Endothelial cell of umbilical vein (primary cell): ENCODE measurements at regions of chr2 and their contacts with region 1.

Region 1: DNA sequence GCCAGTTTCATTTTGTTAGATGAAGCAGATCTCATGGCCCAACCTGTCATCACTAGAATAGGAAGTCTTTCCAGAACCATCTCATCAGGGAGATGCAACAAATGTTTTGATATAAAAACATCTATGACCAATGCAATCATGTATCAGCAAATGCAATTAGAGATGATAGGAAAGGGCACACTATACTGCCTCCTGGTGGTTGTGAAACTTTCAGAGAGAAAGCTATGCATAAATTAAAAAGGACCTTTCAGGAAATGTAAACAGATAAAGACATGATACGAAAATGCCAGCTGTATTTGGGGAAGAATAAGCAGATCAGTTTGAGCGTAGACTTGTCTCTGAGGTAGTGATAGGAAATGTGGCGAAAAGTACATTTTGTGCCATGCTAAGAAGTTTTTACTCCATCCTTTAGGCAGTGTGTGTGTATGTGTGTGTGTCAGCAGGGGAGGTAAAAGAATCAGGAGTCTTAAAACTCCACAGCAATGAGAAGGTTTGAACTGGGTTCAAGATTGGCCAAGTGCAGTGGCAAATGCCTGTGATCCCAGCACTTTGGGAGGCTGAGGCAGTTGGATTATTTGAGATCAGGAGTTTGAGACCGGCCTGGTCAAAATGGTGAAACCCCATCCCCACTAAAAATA is 479.3 kb downstream of the CPS1 start:
- DNase-seq: peak; percentile 53
- H3K4me3 ChIP-seq: no peak overlapping the region
- H3K27ac ChIP-seq: no peak overlapping the region
- H3K4me1 ChIP-seq: no peaks in the 10 kb centered on the region
- H3K27me3 ChIP-seq: no peaks in the 10 kb centered on the region
- CTCF ChIP-seq: peak; percentile 43 to 56
- POLR2A ChIP-seq: no peak

Region 2: DNA sequence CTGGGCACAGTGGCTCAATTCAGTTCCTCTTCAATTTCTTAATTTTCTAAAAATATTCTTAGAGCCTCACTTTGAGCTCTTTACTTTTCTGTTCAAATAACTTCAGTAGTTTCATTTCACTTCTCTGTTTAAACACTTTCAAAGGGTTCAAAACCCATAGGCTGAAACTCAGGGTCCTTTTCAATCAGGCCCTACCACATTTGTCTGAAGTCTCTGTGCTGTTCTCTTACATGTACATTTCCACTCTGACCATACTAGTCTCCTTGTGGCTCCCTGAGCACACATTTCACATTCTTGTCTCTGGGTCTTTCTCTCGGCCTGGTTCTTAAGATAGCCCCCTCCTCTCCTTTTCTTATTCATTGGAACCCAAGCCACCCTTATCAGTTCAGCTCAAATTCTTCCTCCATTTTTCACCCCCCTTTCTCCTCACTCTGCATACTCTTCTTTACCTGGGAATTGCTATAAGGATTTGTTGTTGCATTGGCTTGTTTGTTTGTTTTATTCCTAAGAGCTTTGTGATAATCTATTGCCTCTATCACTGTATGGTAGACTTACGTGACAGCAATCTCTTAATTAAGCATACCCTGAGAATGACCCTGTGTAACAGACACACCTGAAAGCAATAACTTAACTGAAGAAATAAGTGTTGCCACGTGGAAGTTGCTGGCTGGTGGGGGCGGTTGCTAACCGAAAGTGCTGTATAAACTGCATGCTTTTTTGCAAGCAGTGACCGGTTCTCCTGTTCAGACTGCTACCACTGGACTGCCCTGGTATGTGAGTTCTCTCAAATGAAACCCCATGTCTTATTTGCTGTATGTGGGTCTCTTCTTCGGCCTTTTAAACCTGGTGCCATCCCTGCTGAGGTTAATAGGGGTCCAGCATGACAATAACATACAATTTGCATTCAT is 782.7 kb before region 1 on chr2:
- CTCF ChIA-PET with region 1: no interaction called
- POLR2A ChIA-PET with region 1: no interaction called
- dilution Hi-C with region 1: no loop called
- intact Hi-C with region 1: loop called (anchors 5 kb)
- DNase-seq: no peak
- H3K4me3 ChIP-seq: no peak overlapping the region
- H3K27ac ChIP-seq: no peak overlapping the region
- H3K4me1 ChIP-seq: no peaks in the 10 kb centered on the region
- H3K27me3 ChIP-seq: no peaks in the 10 kb centered on the region
- CTCF ChIP-seq: no peak
- POLR2A ChIP-seq: no peak

Region 3: GRCh38 chr2:210577263-210578071 is 458.2 kb before region 1 on chr2:
- CTCF ChIA-PET with region 1: interaction called, 10 read pairs
- POLR2A ChIA-PET with region 1: no interaction called
- dilution Hi-C with region 1: no loop called
- intact Hi-C with region 1: loop called (anchors 1 kb)
- DNase-seq: peak; percentile 45
- H3K4me3 ChIP-seq: no peak overlapping the region
- H3K27ac ChIP-seq: no peak overlapping the region
- H3K4me1 ChIP-seq: no peaks in the 10 kb centered on the region
- H3K27me3 ChIP-seq: no peaks in the 10 kb centered on the region
- CTCF ChIP-seq: peak; percentile 44 to 63
- POLR2A ChIP-seq: no peak

Region 4: GRCh38 chr2:210663631-210664089 is 372.0 kb before region 1 on chr2:
- CTCF ChIA-PET with region 1: interaction called, 27 read pairs
- POLR2A ChIA-PET with region 1: no interaction called
- dilution Hi-C with region 1: no loop called
- intact Hi-C with region 1: no loop called
- DNase-seq: peak; percentile 3
- H3K4me3 ChIP-seq: no peak overlapping the region
- H3K27ac ChIP-seq: no peak overlapping the region
- H3K4me1 ChIP-seq: no peaks in the 10 kb centered on the region
- H3K27me3 ChIP-seq: no peaks in the 10 kb centered on the region
- CTCF ChIP-seq: no peak
- POLR2A ChIP-seq: no peak

Region 5: GRCh38 chr2:210814251-210815025 is 221.2 kb before region 1 on chr2:
- CTCF ChIA-PET with region 1: no interaction called
- POLR2A ChIA-PET with region 1: no interaction called
- dilution Hi-C with region 1: no loop called
- intact Hi-C with region 1: no loop called
- DNase-seq: no peak
- H3K4me3 ChIP-seq: no peak overlapping the region
- H3K27ac ChIP-seq: no peak overlapping the region
- H3K4me1 ChIP-seq: no peaks in the 10 kb centered on the region
- H3K27me3 ChIP-seq: no peaks in the 10 kb centered on the region
- CTCF ChIP-seq: no peak
- POLR2A ChIP-seq: no peak

Region 6: GRCh38 chr2:210997373-210997772 is 38.3 kb before region 1 on chr2:
- CTCF ChIA-PET with region 1: interaction called, 3 read pairs
- POLR2A ChIA-PET with region 1: no interaction called
- dilution Hi-C with region 1: no loop called
- intact Hi-C with region 1: loop called (anchors 5 kb)
- DNase-seq: peak; percentile 86
- H3K4me3 ChIP-seq: no peak overlapping the region
- H3K27ac ChIP-seq: peak overlapping the region; percentile 53
- H3K4me1 ChIP-seq: peaks cover 20% of the 10 kb centered on the region
- H3K27me3 ChIP-seq: no peaks in the 10 kb centered on the region
- CTCF ChIP-seq: no peak
- POLR2A ChIP-seq: no peak